SK-N-SH (cell line): ENCODE measurements at regions of chr7 and their contacts with region 1.

Region 1: DNA sequence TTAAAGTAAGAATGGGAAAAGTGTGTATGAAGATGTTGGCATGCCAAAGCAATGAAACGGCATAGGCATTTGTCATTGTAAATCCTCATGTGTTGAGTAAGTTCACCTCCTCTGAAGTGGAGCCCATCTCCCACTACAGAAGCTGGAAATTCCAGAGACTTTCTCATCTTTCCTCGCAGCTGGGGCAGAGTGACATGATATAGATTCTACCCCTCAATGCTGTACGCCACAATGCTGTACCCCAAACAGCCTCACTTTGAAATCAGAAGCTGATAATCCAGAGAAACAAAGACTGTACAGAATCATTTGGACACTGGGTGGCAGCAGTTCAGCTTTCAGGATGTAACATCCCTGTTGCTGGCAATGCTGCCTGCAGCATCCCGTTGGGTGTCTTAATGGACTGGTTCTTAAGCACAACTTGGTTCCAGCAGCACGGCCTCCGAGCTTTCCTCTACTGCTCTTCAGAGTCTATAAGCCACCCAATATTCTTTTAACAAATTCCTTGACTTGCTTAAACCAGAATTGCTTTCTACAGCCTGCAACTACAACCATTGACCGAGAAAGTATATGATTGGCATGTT is 18.8 kb downstream of the ZC3HAV1L start:
- DNase-seq: peak; percentile 88
- H3K4me3 ChIP-seq: peak overlapping the region in 1 of 2 experiments; percentile 31; a peak in 1 of 4 replicates
- H3K27ac ChIP-seq: no peak overlapping the region
- H3K4me1 ChIP-seq: peaks cover 0 to 3% of the 10 kb centered on the region in 2 experiments; a peak in 2 of 4 replicates
- H3K27me3 ChIP-seq: 0 out of 2 replicates have a peak, but pooled peaks cover 4% of the 10 kb centered on the region
- CTCF ChIP-seq: peak; percentile 88
- EP300 ChIP-seq: no peak
- RAD21 ChIP-seq: peak; percentile 89

Region 2: DNA sequence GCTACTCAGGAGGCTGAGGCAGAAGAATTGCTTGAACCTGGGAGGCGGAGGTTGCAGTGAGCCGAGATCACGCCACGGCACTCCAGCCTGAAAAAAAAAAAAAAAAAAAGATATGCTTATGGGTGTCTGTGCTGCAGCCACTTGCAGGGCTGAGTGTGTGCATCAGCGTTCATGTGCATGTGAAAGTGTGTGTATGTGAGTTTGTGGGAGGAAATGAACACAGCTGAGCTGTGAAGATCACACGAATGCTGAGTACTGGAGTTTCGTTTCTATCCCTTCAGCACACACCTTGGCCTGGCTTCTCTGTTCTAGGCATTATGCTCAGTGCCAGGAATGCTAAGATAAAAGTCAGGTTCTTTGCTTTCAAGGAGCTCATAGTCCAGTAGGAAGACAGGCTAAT is 303.8 kb before region 1 on chr7:
- CTCF ChIA-PET with region 1: no interaction called
- POLR2A ChIA-PET with region 1: no interaction called
- DNase-seq: no peak
- H3K4me3 ChIP-seq: no peak overlapping the region
- H3K27ac ChIP-seq: no peak overlapping the region
- H3K4me1 ChIP-seq: no peaks in the 10 kb centered on the region; a peak in 1 of 4 replicates
- H3K27me3 ChIP-seq: no peaks in the 10 kb centered on the region
- CTCF ChIP-seq: no peak
- EP300 ChIP-seq: no peak
- RAD21 ChIP-seq: no peak

Region 3: GRCh38 chr7:138865843-138866242 is 151.2 kb before region 1 on chr7:
- CTCF ChIA-PET with region 1: no interaction called
- POLR2A ChIA-PET with region 1: no interaction called
- DNase-seq: no peak
- H3K4me3 ChIP-seq: no peak overlapping the region
- H3K27ac ChIP-seq: no peak overlapping the region
- H3K4me1 ChIP-seq: no peaks in the 10 kb centered on the region; a peak in 2 of 4 replicates
- H3K27me3 ChIP-seq: no peaks in the 10 kb centered on the region
- CTCF ChIP-seq: peak; percentile 40
- EP300 ChIP-seq: no peak
- RAD21 ChIP-seq: peak; percentile 40

Region 4: DNA sequence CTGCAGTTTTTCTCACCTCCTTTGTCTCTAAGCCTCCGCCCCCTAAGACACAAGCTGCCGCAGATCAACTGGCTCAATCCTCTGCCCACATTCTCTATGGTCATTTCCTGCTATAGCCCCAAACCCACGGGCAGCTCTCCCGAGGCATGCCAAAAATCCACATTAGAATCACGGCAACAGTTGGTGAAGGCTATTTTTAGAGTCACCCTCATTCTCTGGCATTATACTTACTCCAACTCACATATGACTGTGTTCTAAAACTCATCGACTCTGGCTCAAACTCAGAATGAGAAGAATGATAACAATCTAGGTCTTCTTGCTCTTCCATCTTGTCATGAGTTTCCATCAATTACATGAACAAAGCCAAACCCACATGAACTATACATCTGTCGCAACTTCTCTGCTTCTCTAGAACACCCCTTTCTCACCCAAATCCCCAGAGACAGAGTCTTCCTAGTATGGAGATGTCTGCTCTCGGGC is 24.9 kb before region 1 on chr7:
- CTCF ChIA-PET with region 1: interaction called, 22 read pairs
- POLR2A ChIA-PET with region 1: interaction called, 4 read pairs
- DNase-seq: no peak
- H3K4me3 ChIP-seq: no peak overlapping the region
- H3K27ac ChIP-seq: no peak overlapping the region
- H3K4me1 ChIP-seq: no peaks in the 10 kb centered on the region
- H3K27me3 ChIP-seq: no peaks in the 10 kb centered on the region
- CTCF ChIP-seq: no peak
- EP300 ChIP-seq: no peak
- RAD21 ChIP-seq: no peak

Region 5: DNA sequence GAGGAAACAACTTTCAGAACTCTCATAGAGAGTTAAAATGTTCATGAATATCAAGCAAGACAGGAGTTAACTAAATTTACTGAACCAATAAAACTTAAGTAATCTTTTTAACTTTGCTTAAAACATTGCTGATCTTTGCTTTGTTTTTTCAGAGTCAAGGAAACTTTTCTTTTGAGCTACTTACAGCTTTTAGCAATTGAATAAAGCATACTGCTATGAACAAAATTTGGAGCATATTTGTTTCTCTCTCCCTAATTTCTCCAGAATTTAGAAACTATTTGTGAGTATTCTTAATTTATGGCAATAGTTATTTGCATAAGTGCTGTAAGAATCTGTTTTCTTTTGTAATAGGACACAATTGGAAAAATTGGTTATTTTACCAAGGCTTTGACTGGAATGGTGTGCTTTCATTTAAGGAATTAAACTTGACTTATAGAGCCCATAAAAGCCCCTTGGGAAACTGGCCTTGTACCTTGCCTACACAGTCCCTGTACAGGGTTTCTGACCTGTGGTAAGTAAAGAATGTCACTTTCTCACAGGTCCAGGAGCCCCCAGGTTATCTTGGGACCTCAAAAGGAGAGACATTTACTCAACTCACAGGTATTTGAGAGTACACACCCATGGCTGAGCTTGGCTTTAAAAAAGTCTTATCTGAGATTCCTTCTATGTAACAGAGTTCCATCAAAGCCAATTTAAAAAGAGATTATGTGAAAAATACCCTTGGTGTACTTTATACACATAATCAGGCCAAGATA is 12.5 kb before region 1 on chr7:
- CTCF ChIA-PET with region 1: interaction called, 22 read pairs
- POLR2A ChIA-PET with region 1: no interaction called
- DNase-seq: no peak
- H3K4me3 ChIP-seq: no peak overlapping the region
- H3K27ac ChIP-seq: no peak overlapping the region
- H3K4me1 ChIP-seq: no peaks in the 10 kb centered on the region
- H3K27me3 ChIP-seq: no peaks in the 10 kb centered on the region
- CTCF ChIP-seq: no peak
- EP300 ChIP-seq: no peak
- RAD21 ChIP-seq: no peak

Region 6: DNA sequence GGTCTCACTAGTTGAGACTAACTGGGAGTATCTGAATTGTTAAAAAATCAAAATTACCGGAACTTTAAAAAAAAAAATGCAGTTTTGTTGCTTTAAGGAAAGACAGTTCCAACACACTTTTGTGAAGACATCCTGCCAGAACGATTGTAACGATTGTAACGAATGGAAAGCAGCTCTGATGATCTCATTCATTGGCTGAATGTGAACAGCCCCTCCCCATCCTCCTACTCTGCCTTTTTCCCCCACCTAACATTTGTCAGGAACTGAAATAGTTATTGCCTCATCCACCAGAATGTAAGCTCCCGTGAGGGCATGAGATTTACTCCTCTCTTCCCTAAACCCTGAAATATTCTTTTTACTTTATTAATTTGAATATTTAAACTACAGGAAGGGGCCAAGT is 41.9 kb after region 1 on chr7:
- CTCF ChIA-PET with region 1: interaction called, 16 read pairs
- POLR2A ChIA-PET with region 1: no interaction called
- DNase-seq: no peak
- H3K4me3 ChIP-seq: no peak overlapping the region
- H3K27ac ChIP-seq: no peak overlapping the region
- H3K4me1 ChIP-seq: peaks cover 5 to 8% of the 10 kb centered on the region in 2 experiments; a peak in 3 of 4 replicates
- H3K27me3 ChIP-seq: no peaks in the 10 kb centered on the region
- CTCF ChIP-seq: no peak
- EP300 ChIP-seq: no peak
- RAD21 ChIP-seq: no peak

Region 7: GRCh38 chr7:139080905-139081304 is 63.9 kb after region 1 on chr7:
- CTCF ChIA-PET with region 1: interaction called, 140 read pairs
- POLR2A ChIA-PET with region 1: no interaction called
- DNase-seq: no peak
- H3K4me3 ChIP-seq: no peak overlapping the region
- H3K27ac ChIP-seq: no peak overlapping the region
- H3K4me1 ChIP-seq: no peaks in the 10 kb centered on the region
- H3K27me3 ChIP-seq: no peaks in the 10 kb centered on the region
- CTCF ChIP-seq: no peak
- EP300 ChIP-seq: no peak
- RAD21 ChIP-seq: no peak